ENCODE measurements at regions of chr10 and their contacts with region 1.

Region 1: DNA sequence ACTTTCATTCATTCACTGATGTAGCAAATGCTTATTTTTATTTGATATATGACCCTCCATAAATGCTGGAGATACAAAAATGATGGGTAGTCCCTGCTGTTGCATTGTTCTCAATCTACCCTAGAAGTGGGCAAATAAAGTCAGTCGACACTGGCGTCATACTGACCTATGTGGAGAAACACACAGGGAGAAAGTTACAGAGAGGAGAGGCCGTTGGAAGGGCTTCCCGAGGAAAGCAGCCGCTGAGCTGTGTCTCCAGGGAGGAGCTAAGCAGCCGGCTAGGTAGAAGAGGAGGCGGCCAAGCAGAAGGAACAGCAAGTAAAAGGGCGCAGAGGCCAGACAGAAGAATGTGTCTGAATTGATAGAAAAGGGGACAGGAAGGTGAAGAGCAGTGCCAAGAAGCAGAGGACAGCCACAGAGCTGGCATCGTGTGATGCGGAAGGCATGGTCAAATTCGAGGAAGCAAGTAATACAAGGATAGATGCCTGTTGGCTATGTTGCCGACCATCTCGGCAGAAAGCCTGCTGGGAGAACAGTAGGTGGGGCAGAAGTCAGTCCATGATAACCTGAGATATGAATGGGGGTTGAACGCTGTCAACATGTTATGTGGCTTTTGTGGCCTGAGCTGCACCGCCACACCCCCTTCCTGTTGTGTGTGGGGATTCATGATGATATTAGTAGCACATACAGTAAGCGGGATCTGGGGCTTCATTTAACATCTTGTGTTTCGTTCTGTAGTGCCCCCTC is 25.9 kb downstream of the ST8SIA6 start:
- DNase-seq: no peak
- ATAC-seq: no peak
- H3K4me3 ChIP-seq: no peak overlapping the region
- H3K27ac ChIP-seq: no peak overlapping the region
- H3K4me1 ChIP-seq: no peaks in the 10 kb centered on the region
- H3K27me3 ChIP-seq: no peaks in the 10 kb centered on the region
- CTCF ChIP-seq: no peak
- POLR2A ChIP-seq: no peak

Region 2: DNA sequence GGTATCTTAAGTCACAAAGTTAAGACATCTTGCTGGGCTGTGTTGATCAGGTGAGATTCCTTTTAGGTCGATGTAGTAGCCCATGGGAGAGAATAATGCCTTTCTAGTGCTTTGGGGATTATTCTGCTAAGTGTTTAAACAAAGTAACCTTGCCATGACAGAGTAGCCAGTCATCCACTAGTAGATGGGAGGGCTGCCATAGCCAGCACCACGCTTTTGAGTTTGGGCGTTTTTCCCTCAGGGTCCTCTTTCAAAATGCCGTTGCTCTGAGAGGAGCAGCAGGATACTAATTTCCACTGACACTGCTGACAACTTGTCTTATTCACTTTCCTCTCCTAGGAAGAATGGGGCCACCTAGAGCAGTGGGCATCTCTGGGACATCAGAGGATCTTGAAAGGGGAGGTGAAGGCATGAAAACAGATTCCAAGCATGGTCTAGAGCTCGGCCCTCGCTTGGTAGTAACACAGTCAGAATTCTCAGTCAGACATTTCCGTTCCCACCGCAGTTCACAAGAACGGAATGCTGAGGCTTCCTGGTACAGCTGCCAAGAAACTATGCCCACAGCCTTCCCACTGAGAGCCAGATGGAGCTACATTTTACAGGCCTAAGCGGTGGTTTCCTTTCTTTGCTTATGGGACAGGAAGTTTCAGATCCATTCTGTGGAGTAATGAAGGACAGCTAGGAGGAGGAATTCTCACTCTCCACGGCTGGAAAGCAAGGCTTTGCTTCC is 596.0 kb before region 1 on chr10:
- intact Hi-C with region 1: loop called (anchors 10 kb)
- DNase-seq: peak; percentile 67 to 84 (median 72)
- ATAC-seq: peak; percentile 74
- H3K4me3 ChIP-seq: no peak overlapping the region
- H3K27ac ChIP-seq: peak overlapping the region; percentile 52 to 83 (median 74)
- H3K4me1 ChIP-seq: peaks cover 37% of the 10 kb centered on the region
- H3K27me3 ChIP-seq: no peaks in the 10 kb centered on the region
- CTCF ChIP-seq: no peak
- POLR2A ChIP-seq: peak in 2 of 3 donors; percentile 11 to 38

Region 3: GRCh38 chr10:17290226-17290625 is 138.3 kb before region 1 on chr10:
- intact Hi-C with region 1: loop called (anchors 5 kb)
- DNase-seq: peak in 3 of 4 donors; percentile 18 to 36 (median 32)
- ATAC-seq: peak; percentile 77
- H3K4me3 ChIP-seq: no peak overlapping the region
- H3K27ac ChIP-seq: no peak overlapping the region
- H3K4me1 ChIP-seq: no peaks in the 10 kb centered on the region
- H3K27me3 ChIP-seq: no peaks in the 10 kb centered on the region
- CTCF ChIP-seq: peak in 6 of 7 experiments; percentile 25 to 83 (median 72)
- POLR2A ChIP-seq: no peak

Region 4: DNA sequence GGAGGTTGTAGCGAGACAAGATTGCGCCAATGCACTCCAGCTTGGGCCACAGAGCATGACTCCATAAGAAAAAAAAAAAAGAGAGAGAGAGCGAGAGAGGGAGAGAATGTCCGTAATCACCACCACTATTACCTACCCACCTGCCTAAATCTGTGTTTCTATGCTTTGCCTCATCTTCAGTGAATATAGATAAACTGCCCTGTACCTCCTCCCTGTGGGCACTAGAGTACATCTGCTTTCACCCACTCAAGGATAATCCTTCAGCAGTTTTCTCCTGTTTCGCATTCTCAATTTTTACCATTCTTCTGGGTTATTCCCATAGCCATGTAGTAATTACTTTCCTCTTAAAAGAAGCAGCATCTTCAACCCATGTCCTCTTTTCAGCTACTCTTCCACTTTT is 1600.1 kb after region 1 on chr10:
- intact Hi-C with region 1: no loop called
- DNase-seq: no peak
- ATAC-seq: no peak
- H3K4me3 ChIP-seq: no peak overlapping the region
- H3K27ac ChIP-seq: no peak overlapping the region
- H3K4me1 ChIP-seq: no peaks in the 10 kb centered on the region
- H3K27me3 ChIP-seq: no peaks in the 10 kb centered on the region
- CTCF ChIP-seq: no peak
- POLR2A ChIP-seq: no peak